Naive thymus-derived CD4-positive, alpha-beta T cell (primary cell): ENCODE measurements at regions of chr4 and their contacts with region 1.

Region 1: DNA sequence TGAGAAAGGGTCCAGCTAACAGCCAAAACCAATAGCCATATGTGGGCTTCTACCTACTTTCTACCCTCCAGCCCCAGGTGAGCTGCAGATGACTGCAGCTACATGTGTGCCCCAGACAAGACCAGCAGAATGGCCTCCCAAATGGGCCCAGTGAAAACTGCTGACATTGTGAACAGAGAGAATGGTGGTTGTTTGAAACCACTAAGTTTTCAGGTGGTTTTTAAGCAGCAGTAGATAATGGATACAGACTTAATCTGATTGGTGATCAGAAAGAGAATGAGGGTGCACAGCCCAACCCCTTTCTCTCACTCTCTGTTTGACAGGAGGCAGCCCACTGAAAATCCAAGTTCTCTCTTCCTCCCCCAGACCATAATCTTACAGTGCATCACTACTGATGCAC is 42.5 kb upstream of the BBS12 start:
- DNase-seq: peak in 1 of 9 donors; percentile 48
- ATAC-seq: no peak
- H3K4me3 ChIP-seq: no peak overlapping the region
- H3K4me3 Mint-ChIP-seq: peak overlapping the region in 1 of 10 donors; percentile 19
- H3K27ac ChIP-seq: no peak overlapping the region
- H3K27ac Mint-ChIP-seq: peak overlapping the region in 1 of 9 donors; percentile 67
- H3K4me1 ChIP-seq: no peaks in the 10 kb centered on the region
- H3K4me1 Mint-ChIP-seq: peaks cover 0 to 59% (median 4%) of the 10 kb centered on the region in 7 donors
- H3K27me3 ChIP-seq: no peaks in the 10 kb centered on the region
- H3K27me3 Mint-ChIP-seq: peaks cover 0 to 7% (median 0%) of the 10 kb centered on the region in 5 donors

Region 2: GRCh38 chr4:122674371-122674770 is 15.6 kb before region 1 on chr4:
- CTCF ChIA-PET with region 1: no interaction called
- POLR2A ChIA-PET with region 1: no interaction called
- intact Hi-C with region 1: loop called in 1 of 2 experiments (anchors 2 kb)
- DNase-seq: no peak
- ATAC-seq: no peak
- H3K4me3 ChIP-seq: no peak overlapping the region
- H3K4me3 Mint-ChIP-seq: peak overlapping the region in 1 of 10 donors; percentile 45
- H3K27ac ChIP-seq: no peak overlapping the region
- H3K27ac Mint-ChIP-seq: peak overlapping the region in 1 of 9 donors; percentile 71
- H3K4me1 ChIP-seq: no peaks in the 10 kb centered on the region
- H3K4me1 Mint-ChIP-seq: peaks cover 0 to 46% (median 6%) of the 10 kb centered on the region in 7 donors
- H3K27me3 ChIP-seq: no peaks in the 10 kb centered on the region
- H3K27me3 Mint-ChIP-seq: peaks cover 0 to 21% (median 2%) of the 10 kb centered on the region in 5 donors

Region 3: GRCh38 chr4:122703868-122704267 is 13.9 kb after region 1 on chr4:
- CTCF ChIA-PET with region 1: no interaction called
- POLR2A ChIA-PET with region 1: no interaction called
- intact Hi-C with region 1: loop called in 1 of 2 experiments (anchors 2 kb)
- DNase-seq: no peak
- ATAC-seq: no peak
- H3K4me3 ChIP-seq: no peak overlapping the region
- H3K4me3 Mint-ChIP-seq: no peak overlapping the region
- H3K27ac ChIP-seq: no peak overlapping the region
- H3K27ac Mint-ChIP-seq: no peak overlapping the region
- H3K4me1 ChIP-seq: no peaks in the 10 kb centered on the region
- H3K4me1 Mint-ChIP-seq: peaks cover 0 to 63% (median 5%) of the 10 kb centered on the region in 7 donors
- H3K27me3 ChIP-seq: no peaks in the 10 kb centered on the region
- H3K27me3 Mint-ChIP-seq: peaks cover 0 to 4% (median 0%) of the 10 kb centered on the region in 5 donors